Gastrocnemius medialis (tissue), 4 donors: ENCODE measurements at regions of chr1 and their contacts with region 1.

Region 1: DNA sequence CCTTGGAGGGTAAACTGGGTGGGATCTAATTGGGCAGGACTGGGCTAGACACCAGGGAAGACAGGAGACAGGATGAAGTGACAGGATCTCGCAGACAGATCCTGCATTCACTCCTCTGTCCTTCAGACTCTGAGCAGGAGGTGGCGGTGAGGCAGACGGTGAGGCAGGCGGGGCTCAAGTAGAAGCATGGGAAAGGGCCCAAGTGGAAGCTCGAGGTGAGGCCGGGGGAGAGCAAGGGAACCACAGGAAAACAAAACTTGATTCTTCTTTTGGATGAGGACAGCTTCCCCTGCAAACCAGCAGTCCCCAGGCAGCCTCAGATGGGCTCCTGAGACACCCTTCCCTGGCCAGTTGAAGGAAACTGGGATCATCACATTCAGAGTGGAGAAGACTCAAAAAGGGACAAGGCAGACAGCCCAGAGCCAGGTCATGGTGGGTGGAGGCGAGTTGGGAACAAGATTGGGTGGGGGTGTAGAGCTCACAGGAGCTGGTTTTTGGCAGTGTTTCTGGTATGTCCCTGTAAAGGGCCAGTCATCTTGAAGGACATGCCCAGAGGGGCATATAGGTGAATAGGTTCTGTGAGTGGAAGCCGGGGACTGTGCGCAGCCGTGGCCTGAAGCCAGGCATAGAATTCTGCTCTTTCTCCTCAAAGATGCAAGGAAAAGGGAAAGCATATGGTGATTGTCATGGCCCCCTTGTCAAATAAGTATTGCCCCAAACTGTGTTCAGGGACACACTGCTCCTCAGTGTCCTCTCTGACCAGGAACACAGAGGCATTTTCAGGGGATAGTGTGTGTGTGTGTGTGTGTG is 18.0 kb downstream of the INKA2 start:
- DNase-seq: no peak
- ATAC-seq: peak in 1 of 2 donors; percentile 11
- H3K4me3 ChIP-seq: no peak overlapping the region
- H3K27ac ChIP-seq: peak overlapping the region; percentile 81 to 93 (median 87)
- H3K4me1 ChIP-seq: peaks cover 63% of the 10 kb centered on the region in 2 donors
- H3K27me3 ChIP-seq: no peaks in the 10 kb centered on the region
- CTCF ChIP-seq: no peak
- POLR2A ChIP-seq: no peak

Region 2: GRCh38 chr1:111739194-111739924 is 18.2 kb after region 1 on chr1 and contains the start of gene INKA2:
- in situ Hi-C with region 1: no loop called
- intact Hi-C with region 1: loop called (anchors 1 kb)
- DNase-seq: peak; percentile 90 to 91
- ATAC-seq: peak; percentile 79
- H3K4me3 ChIP-seq: peak within 1 kb of the TSS; percentile 56 to 80 (median 70)
- H3K27ac ChIP-seq: peak within 1 kb of the TSS; percentile 85 to 96 (median 93)
- H3K4me1 ChIP-seq: peaks cover 36 to 38% of the 10 kb centered on the region in 2 donors
- H3K27me3 ChIP-seq: no peaks in the 10 kb centered on the region
- CTCF ChIP-seq: peak in 2 of 5 experiments; percentile 17 to 18
- POLR2A ChIP-seq: peak; percentile 94 to 95
- total RNA-seq, gene INKA2: 4.7 to 11.8 (median 5.1) TPM

Region 3: GRCh38 chr1:112105557-112105956 is 384.4 kb after region 1 on chr1:
- in situ Hi-C with region 1: no loop called
- intact Hi-C with region 1: no loop called
- DNase-seq: no peak
- ATAC-seq: no peak
- H3K4me3 ChIP-seq: no peak overlapping the region
- H3K27ac ChIP-seq: no peak overlapping the region
- H3K4me1 ChIP-seq: no peaks in the 10 kb centered on the region
- H3K27me3 ChIP-seq: no peaks in the 10 kb centered on the region
- CTCF ChIP-seq: no peak
- POLR2A ChIP-seq: no peak